ENCODE measurements at regions of chr1 and their contacts with region 1.

Region 1: GRCh38 chr1:18556364-18556763 is 74.3 kb upstream of the PAX7 start:
- DNase-seq: no peak
- ATAC-seq: no peak
- H3K4me3 ChIP-seq: no peak overlapping the region
- H3K27ac ChIP-seq: no peak overlapping the region
- H3K4me1 ChIP-seq: no peaks in the 10 kb centered on the region
- H3K27me3 ChIP-seq: peaks cover 3 to 8% of the 10 kb centered on the region in 2 experiments
- CTCF ChIP-seq: peak; percentile 26 to 46 (median 33); a peak in 4 of 6 replicates
- EP300 ChIP-seq: no peak
- POLR2A ChIP-seq: no peak
- RAD21 ChIP-seq: no peak

Region 2: GRCh38 chr1:18581420-18581880 is 25.1 kb after region 1 on chr1:
- CTCF ChIA-PET with region 1: interaction called, 27 read pairs
- POLR2A ChIA-PET with region 1: no interaction called
- RAD21 ChIA-PET with region 1: interaction called, 3 read pairs
- SMC1A ChIA-PET with region 1: interaction called, 7 read pairs
- in situ Hi-C with region 1: no loop called
- intact Hi-C with region 1: no loop called
- DNase-seq: no peak
- ATAC-seq: peak; percentile 87
- H3K4me3 ChIP-seq: no peak overlapping the region
- H3K27ac ChIP-seq: no peak overlapping the region
- H3K4me1 ChIP-seq: no peaks in the 10 kb centered on the region
- H3K27me3 ChIP-seq: no peaks in the 10 kb centered on the region
- CTCF ChIP-seq: peak; percentile 74 to 92 (median 81)
- EP300 ChIP-seq: no peak
- POLR2A ChIP-seq: no peak
- RAD21 ChIP-seq: peak; percentile 75

Region 3: DNA sequence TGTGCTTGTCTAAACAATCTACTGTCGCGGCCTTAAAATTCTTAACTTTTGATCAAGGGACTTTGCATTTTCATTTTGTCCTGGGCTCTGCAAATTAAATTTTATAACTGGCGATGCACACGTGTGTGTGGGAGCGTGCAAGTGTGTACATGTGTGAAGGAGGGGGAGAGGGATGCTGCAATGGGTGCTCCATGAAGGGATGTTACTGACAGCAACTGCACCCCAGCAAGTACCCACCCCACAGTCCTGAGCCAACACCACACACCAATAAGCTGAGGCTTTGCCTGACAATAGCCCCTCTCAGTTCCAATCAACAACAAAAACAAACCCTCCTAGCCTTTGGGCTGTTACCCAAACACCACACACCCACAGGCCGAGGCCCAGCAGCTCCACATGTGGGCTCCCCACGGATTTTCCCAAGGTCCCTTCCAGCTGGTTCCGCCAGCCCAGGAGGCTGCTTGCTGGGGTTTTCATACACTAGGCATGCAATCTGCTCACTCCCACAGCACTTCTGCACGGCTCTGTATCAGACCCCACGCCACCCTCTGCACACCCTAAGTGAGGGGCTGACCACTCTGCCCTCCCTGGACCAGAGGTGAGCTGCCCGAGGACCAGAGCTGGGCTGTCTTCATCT is 432.9 kb after region 1 on chr1:
- CTCF ChIA-PET with region 1: no interaction called
- POLR2A ChIA-PET with region 1: no interaction called
- RAD21 ChIA-PET with region 1: no interaction called
- SMC1A ChIA-PET with region 1: no interaction called
- in situ Hi-C with region 1: no loop called
- intact Hi-C with region 1: no loop called
- DNase-seq: no peak
- ATAC-seq: no peak
- H3K4me3 ChIP-seq: no peak overlapping the region
- H3K27ac ChIP-seq: no peak overlapping the region
- H3K4me1 ChIP-seq: no peaks in the 10 kb centered on the region
- H3K27me3 ChIP-seq: peaks cover 0 to 2% of the 10 kb centered on the region in 2 experiments; a peak in 1 of 4 replicates
- CTCF ChIP-seq: no peak
- EP300 ChIP-seq: no peak
- POLR2A ChIP-seq: no peak
- RAD21 ChIP-seq: no peak

Measured in GM12878 (cell line).